ENCODE measurements at regions of chr11 and their contacts with region 1.

Region 1: GRCh38 chr11:62591448-62592145 is at the start of gene TUT1:
- DNase-seq: peak; percentile 96
- H3K4me3 Mint-ChIP-seq: peak within 1 kb of the TSS; percentile 99
- H3K27ac Mint-ChIP-seq: peak within 1 kb of the TSS; percentile 91
- H3K4me1 Mint-ChIP-seq: peaks cover 48% of the 10 kb centered on the region
- H3K27me3 Mint-ChIP-seq: no peaks in the 10 kb centered on the region
- total RNA-seq, gene TUT1: 38.7 and 40.7 TPM in 2 replicates

Region 2: GRCh38 chr11:62370743-62371440 is 220.7 kb before region 1 on chr11:
- intact Hi-C with region 1: no loop called
- DNase-seq: peak; percentile 38
- H3K4me3 Mint-ChIP-seq: peak overlapping the region; percentile 71
- H3K27ac Mint-ChIP-seq: peak overlapping the region; percentile 84
- H3K4me1 Mint-ChIP-seq: peaks cover 19% of the 10 kb centered on the region
- H3K27me3 Mint-ChIP-seq: no peaks in the 10 kb centered on the region

Region 3: GRCh38 chr11:62394825-62395538 is 196.6 kb before region 1 on chr11:
- intact Hi-C with region 1: loop called (anchors 1 kb)
- DNase-seq: peak; percentile 48
- H3K4me3 Mint-ChIP-seq: no peak overlapping the region
- H3K27ac Mint-ChIP-seq: no peak overlapping the region
- H3K4me1 Mint-ChIP-seq: peaks cover 8% of the 10 kb centered on the region
- H3K27me3 Mint-ChIP-seq: peaks cover 2% of the 10 kb centered on the region

Region 4: DNA sequence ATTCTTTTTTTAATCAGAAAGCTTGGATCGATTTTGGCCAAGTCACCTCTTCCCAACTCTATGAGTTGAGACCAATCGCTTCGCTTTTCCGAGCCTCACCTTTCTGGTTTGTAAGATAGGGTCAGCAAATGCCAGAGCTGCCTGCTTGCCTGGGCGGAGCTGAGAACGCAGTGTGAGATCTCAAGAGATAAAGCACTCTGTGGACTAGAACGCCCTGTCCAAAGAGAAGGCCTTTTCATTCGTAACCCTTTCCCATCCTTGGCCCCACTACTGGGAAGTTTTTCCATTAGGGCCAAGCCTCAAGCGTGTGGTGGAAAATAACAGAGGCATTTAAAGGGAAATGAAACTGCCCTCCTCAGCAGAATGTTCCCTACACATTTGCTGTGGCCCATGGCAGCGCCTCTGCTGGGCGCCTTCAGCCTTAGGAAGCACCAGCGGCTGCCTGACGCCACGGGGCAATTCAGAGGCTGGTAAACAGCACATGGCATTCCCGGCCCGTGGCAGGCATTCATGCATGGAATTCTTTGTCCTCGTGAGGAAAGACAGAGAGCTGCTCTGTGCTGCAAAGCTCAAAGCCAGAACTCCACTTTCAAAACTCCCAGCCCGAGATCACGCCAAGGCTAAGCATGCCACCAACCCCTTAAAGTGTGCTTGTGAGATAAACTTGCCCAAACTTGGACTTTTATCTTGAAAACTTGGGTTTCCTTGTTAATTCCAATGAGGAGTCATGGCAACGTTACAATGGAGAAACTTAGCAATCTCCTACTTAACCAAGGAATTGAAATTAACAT is 83.1 kb before region 1 on chr11:
- intact Hi-C with region 1: no loop called
- DNase-seq: no peak
- H3K4me3 Mint-ChIP-seq: no peak overlapping the region
- H3K27ac Mint-ChIP-seq: no peak overlapping the region
- H3K4me1 Mint-ChIP-seq: peaks cover 10% of the 10 kb centered on the region
- H3K27me3 Mint-ChIP-seq: peaks cover 10% of the 10 kb centered on the region

Region 5: GRCh38 chr11:62556108-62556871 is 35.3 kb before region 1 on chr11:
- intact Hi-C with region 1: loop called (anchors 1 kb)
- DNase-seq: peak; percentile 87
- H3K4me3 Mint-ChIP-seq: peak overlapping the region; percentile 73
- H3K27ac Mint-ChIP-seq: peak overlapping the region; percentile 99
- H3K4me1 Mint-ChIP-seq: peaks cover 93% of the 10 kb centered on the region
- H3K27me3 Mint-ChIP-seq: no peaks in the 10 kb centered on the region

Region 6: GRCh38 chr11:62645956-62646824 is 54.6 kb after region 1 on chr11 and contains the start of gene GANAB:
- intact Hi-C with region 1: loop called (anchors 1 kb)
- DNase-seq: peak; percentile 97
- H3K4me3 Mint-ChIP-seq: peak within 1 kb of the TSS; percentile 100
- H3K27ac Mint-ChIP-seq: peak within 1 kb of the TSS; percentile 98
- H3K4me1 Mint-ChIP-seq: peaks cover 25% of the 10 kb centered on the region
- H3K27me3 Mint-ChIP-seq: no peaks in the 10 kb centered on the region
- total RNA-seq, gene GANAB: 238 and 255 TPM in 2 replicates

Region 7: GRCh38 chr11:62671575-62672389 is 80.2 kb after region 1 on chr11 and contains the starts of genes LBHD1 and UQCC3:
- intact Hi-C with region 1: loop called (anchors 1 kb)
- DNase-seq: peak; percentile 75
- H3K4me3 Mint-ChIP-seq: peak within 1 kb of the TSS; percentile 97
- H3K27ac Mint-ChIP-seq: peak within 1 kb of the TSS; percentile 98
- H3K4me1 Mint-ChIP-seq: peaks cover 34% of the 10 kb centered on the region
- H3K27me3 Mint-ChIP-seq: no peaks in the 10 kb centered on the region
- total RNA-seq, gene LBHD1: 23.4 and 24.3 TPM in 2 replicates
- total RNA-seq, gene UQCC3: 8.9 and 11.4 TPM in 2 replicates

Region 8: DNA sequence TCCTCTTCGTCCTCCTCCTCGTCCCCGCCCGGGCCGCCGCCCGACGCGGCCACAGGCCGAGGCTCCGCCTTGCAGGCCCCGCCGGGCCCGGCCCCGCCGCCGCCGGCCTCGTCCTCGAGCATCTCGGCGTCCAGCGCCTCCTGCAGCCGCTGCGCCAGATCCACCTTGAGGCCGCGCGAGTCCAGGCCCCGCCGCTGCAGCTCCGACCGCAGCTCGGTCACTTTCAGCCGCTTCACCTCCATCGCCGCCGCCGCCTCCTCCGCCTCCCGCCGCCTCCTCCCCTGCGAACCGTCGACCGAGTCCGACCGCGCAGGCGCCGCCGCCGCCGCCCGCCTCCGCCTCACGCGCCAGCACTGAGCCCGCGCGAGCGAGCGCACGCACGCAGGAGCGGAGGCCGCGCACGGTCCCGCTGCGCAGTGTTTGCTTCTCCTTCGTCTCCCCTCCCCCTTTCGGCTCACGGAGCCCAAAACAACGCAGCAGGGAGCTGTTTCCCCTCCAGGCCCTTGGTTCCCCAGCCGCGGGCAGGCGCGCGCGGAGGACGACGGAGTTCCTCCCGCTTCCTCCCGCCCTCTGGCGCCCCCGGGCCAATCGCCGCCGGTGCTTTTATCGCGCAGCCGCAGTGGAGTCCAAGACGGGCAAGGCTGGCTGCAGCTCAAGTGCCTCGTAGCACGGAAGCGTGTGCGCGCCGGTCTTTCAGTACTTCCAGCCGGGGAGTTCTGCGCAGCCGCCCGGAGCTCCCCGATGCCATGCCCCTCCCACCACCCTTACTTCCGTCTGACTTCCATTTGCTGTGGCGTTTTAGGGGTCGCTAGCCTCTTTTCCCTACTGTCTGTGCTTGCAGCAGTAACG is 135.5 kb after region 1 on chr11 and contains the start of gene HNRNPUL2:
- intact Hi-C with region 1: loop called (anchors 1 kb)
- DNase-seq: peak; percentile 99
- H3K4me3 Mint-ChIP-seq: peak within 1 kb of the TSS; percentile 91
- H3K27ac Mint-ChIP-seq: peak within 1 kb of the TSS; percentile 99
- H3K4me1 Mint-ChIP-seq: peaks cover 45% of the 10 kb centered on the region
- H3K27me3 Mint-ChIP-seq: no peaks in the 10 kb centered on the region
- total RNA-seq, gene HNRNPUL2: 53.0 and 55.2 TPM in 2 replicates

Region 9: GRCh38 chr11:62860835-62861563 is 269.4 kb after region 1 on chr11:
- intact Hi-C with region 1: loop called (anchors 2 kb)
- DNase-seq: no peak
- H3K4me3 Mint-ChIP-seq: no peak overlapping the region
- H3K27ac Mint-ChIP-seq: no peak overlapping the region
- H3K4me1 Mint-ChIP-seq: peaks cover 65% of the 10 kb centered on the region
- H3K27me3 Mint-ChIP-seq: no peaks in the 10 kb centered on the region

Measured in activated T-helper 1 cell treated with anti-CD3 and anti-CD28 coated beads, Interleukin-12 subunit alpha, Interleukin-12 subunit beta, Interleukin-2, Interleukin-4 antibody, amounts not matched to agents 30 ng/mL and 10 ng/mL and 1 ng/mL, durations not matched to agents 14 hours and 24 hours and 36 hours (primary cell).